Activated T-helper 1 cell treated with anti-CD3 and anti-CD28 coated beads, Interleukin-12 subunit alpha, Interleukin-12 subunit beta, Interleukin-2, Interleukin-4 antibody, amounts not matched to agents 30 ng/mL and 10 ng/mL and 1 ng/mL, durations not matched to agents 14 hours and 24 hours and 36 hours (primary cell): ENCODE measurements at regions of chr16 and their contacts with region 1.

Region 1: DNA sequence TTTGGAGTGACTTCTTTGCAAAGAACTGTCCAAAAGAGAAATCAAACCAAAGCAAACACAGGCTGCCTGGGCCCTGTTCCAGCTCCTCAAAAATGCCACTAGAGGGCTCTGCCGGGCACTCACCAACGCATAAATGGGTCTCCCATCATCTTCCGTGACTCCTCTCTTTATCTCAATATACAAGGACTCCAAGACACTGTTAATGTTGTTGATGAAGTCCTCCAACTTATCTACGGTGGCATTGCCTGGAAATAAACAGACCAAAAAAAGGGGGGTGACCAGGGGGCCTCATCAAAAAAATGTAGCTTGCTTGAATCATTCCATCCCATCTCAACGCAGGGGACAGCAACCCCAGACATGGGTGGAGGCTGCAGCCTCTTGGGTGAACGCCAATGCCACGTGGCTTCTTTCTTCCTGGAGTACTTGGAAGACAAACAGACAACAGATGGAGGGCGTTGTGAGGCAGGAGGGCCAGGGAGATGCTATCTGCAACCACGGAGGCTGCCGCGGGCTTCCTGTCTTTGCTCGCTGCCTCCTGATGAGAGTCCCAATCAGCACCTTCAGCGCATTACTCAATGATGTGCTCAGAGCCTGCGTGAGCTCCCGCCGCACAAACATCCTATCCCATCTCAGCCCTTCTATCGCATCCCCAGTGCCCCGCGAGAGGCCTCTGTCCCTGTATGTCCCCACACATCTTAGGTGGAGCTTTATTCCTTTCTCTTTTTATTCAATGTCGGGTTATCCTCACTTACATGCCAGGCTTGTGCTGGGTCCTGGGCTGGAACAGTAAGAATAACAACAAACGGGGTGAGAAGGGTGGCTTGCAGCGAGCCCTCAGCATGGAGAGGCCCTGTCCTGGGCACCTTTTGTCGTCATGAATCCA is 32.0 kb downstream of the KDM8 start:
- DNase-seq: peak; percentile 88
- H3K4me3 Mint-ChIP-seq: peak overlapping the region; percentile 82
- H3K27ac Mint-ChIP-seq: peak overlapping the region; percentile 99
- H3K4me1 Mint-ChIP-seq: peaks cover 90% of the 10 kb centered on the region
- H3K27me3 Mint-ChIP-seq: no peaks in the 10 kb centered on the region

Region 2: DNA sequence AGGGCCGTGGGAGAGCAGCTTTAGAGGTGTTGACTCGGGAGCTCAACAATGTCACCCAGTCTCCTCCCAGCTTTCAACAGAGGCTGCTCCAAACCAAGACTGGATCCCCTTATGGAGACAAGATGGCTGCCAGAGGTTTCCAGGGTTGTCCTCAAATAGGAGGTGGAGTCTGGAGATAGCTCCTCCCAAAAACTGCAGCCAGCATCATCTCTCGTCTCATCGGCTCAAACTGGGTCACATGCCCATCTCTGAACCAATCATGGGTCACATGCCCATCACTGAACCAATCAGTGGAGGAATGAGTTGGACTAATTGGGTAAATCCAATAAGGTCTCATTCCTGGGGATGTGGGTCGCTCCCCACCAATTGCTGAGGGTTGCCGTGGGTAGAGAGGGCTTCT is 209.7 kb before region 1 on chr16:
- intact Hi-C with region 1: no loop called
- DNase-seq: no peak
- H3K4me3 Mint-ChIP-seq: no peak overlapping the region
- H3K27ac Mint-ChIP-seq: no peak overlapping the region
- H3K4me1 Mint-ChIP-seq: no peaks in the 10 kb centered on the region
- H3K27me3 Mint-ChIP-seq: peaks cover 2% of the 10 kb centered on the region

Region 3: DNA sequence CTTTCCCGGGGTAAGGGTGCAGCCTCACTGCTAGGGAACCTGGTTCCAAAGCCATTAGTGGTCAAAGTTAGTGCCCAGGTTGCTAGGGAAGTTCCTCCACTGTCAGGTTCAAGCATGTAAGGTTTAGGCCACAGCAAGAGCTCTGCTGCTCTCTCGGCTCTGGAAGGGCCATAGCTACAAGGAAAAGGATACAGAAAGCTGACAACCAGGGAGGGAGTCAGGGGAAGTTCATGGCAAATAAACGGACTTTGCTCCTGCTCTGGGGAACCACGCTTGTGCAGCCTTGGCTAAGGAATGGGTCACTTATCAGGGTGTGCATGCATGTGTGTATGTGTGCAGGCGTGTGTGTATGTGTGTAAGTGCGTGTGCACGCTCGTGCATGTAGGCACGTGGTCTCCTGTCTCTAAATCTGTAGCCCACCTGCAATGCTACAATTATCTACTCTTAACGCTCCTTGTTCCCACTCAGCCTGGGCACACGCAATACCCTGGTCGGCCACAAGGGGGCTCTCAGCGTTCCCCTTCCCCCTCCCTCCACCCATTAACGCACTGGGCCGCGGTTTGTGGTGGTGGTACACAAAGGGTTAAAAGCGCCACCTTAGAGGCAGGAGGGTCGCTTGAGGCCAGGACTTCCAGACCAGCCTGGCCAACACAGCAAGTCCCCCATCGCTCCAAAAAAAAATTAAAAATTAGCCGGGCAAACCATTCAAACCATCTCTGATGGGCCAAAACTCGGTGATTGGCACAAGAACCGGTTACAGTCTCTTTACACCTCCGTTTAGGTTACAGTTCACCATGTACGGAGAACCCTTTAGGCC is 80.4 kb before region 1 on chr16:
- intact Hi-C with region 1: loop called (anchors 1 kb)
- DNase-seq: peak; percentile 39
- H3K4me3 Mint-ChIP-seq: no peak overlapping the region
- H3K27ac Mint-ChIP-seq: no peak overlapping the region
- H3K4me1 Mint-ChIP-seq: peaks cover 12% of the 10 kb centered on the region
- H3K27me3 Mint-ChIP-seq: peaks cover 2% of the 10 kb centered on the region

Region 4: DNA sequence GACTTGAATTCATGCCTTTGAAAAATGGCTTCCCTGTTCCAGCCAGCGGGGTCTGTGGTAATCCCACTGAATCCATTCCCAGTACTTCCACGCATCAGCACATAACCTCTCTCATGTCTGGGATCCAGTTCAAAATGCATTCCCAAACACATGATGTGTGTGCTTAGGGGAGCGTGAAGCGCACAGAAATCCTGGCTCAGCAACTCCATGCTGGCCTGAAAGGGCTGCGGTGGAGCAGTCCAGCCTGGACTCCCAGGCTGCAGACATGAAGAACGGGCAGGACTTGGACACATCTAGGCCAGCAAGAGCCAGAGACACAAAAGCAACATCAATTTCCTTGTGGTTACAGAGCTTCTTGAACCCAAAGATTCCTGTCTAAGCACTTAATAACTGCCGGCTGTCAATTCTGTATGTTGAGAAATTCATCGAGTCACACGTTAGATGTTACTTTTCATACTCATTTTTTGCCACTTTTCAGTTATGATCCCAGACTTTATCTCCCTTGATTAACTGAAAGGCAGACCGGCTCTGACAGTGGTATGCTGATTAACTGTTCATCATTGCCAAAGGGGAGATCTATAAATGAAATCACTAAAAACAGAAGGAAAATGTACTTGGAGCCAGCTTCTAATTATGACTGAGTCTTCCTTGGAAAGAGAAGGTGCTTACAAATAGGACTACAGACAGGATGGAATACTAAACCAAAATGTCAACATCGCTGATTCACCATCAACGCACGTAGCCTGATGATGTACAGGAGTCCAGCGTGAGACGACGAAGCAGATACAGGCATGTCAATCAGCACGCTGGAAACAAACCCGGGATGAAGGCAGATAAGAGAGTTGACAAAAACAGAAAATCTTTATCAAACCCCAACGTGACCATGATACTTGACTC is 10.2 kb after region 1 on chr16:
- intact Hi-C with region 1: loop called (anchors 1 kb)
- DNase-seq: no peak
- H3K4me3 Mint-ChIP-seq: peak overlapping the region; percentile 61
- H3K27ac Mint-ChIP-seq: peak overlapping the region; percentile 92
- H3K4me1 Mint-ChIP-seq: peaks cover 88% of the 10 kb centered on the region
- H3K27me3 Mint-ChIP-seq: no peaks in the 10 kb centered on the region

Region 5: DNA sequence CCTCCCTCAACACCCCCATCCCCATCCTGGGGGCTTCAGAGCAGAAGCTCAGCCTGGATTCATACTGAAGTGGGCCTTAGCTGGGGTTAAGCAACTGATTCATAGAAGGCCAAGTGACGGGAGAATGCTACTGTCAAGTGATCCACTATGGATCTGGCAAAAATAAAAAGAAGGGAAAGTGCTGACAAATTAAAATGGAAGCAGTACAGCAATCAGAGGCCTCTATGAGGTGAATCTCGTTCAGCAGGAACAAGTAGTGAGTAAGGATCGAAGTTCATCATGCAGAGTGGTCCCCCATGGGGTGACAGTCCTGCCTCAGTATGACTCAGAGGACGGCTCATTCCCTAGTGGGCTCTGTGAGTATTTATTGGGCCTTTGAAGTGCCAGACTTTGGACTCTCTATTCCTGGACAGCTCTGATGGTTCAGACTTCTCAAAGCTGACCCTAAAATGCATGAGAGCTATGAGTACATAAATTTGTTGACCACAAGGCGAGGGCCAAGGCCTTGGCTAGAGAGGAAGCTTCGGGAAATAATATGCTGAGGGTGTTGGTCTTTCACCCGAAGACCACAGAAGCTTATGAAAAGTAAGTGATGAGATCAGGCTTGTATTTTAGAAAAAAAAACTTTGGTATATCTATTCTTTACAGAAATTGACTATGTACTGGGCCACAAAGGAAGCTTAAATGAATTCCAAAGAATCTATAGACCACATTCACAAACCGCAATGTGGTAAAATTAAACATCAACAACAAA is 38.6 kb after region 1 on chr16:
- intact Hi-C with region 1: loop called (anchors 1 kb)
- DNase-seq: no peak
- H3K4me3 Mint-ChIP-seq: peak overlapping the region; percentile 32
- H3K27ac Mint-ChIP-seq: peak overlapping the region; percentile 87
- H3K4me1 Mint-ChIP-seq: peaks cover 65% of the 10 kb centered on the region
- H3K27me3 Mint-ChIP-seq: no peaks in the 10 kb centered on the region

Region 6: DNA sequence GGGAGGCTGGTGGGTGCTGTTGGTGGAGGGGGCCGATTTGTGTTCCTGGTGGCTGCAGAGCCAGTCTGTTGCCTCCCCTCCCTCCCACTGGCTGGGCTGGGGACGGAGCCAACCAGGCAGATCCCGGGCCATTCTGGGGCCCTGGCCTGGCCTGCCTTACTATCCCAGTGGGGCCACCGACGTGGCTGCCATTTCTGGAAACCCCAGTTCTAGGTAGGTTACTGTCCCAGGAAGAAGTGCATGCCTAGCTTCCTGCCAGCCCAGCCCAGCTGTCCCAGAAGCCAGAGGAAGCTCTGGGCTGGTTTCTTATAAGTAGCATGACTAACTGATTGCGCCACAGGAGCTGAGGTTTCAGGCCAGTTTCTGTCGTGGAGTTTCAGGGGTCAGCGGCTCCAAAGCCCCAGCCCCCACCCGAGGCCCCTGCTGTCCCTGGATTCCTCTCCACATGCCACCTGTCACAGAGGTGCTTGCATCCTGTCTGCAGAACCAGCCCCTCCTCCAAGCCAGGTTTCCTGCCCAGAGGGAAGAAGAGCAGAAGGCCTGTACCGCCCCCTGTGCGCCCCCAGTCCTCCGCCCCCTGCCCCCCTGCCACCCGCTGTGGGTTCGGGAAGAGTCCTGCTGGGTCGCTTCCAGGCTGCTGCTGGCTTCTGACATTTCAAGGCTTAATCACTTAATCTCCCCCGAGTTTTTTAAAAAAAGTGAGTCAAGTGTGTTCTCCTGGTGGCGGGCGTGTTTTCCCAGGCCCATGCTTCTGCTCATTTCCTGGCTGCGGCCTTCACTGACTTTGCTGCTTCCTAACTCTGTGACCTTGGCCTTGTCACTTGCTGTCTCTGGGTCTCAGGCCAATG is 91.7 kb after region 1 on chr16:
- intact Hi-C with region 1: loop called (anchors 1 kb)
- DNase-seq: no peak
- H3K4me3 Mint-ChIP-seq: peak overlapping the region; percentile 63
- H3K27ac Mint-ChIP-seq: peak overlapping the region; percentile 90
- H3K4me1 Mint-ChIP-seq: peaks cover 68% of the 10 kb centered on the region
- H3K27me3 Mint-ChIP-seq: no peaks in the 10 kb centered on the region

Region 7: DNA sequence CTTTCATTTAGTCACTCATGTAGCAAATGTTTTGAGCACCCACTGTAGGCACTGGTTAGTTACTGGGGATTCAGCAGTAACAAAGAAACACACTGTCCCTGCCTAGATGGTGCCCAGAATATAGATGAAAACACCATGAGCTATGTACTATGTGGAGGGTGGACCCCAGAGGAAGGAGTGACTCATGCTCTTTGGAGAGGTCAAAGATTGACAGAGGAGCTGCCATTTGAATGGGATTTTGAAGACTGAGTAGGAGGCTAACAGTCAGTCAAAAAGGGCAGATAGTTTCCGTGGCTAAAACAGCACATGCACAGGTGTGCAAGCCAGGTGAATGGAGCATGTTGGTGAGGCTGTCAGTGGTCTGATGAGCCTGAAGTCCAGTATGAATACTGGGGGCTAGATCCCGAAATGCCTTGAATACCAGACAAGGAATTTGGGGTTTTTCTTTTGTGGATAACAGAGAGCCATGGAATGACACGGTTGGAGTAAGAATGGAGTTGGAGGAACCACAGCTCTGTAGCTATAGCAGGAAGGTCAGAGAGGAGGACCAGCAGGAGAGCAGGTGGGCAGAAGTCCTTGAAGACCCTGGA is 172.8 kb after region 1 on chr16:
- intact Hi-C with region 1: loop called (anchors 1 kb)
- DNase-seq: no peak
- H3K4me3 Mint-ChIP-seq: peak overlapping the region; percentile 100
- H3K27ac Mint-ChIP-seq: peak overlapping the region; percentile 100
- H3K4me1 Mint-ChIP-seq: peaks cover 82% of the 10 kb centered on the region
- H3K27me3 Mint-ChIP-seq: no peaks in the 10 kb centered on the region